Mammary epithelial cell (primary cell): ENCODE measurements at regions of chr9 and their contacts with region 1.

Region 1: DNA sequence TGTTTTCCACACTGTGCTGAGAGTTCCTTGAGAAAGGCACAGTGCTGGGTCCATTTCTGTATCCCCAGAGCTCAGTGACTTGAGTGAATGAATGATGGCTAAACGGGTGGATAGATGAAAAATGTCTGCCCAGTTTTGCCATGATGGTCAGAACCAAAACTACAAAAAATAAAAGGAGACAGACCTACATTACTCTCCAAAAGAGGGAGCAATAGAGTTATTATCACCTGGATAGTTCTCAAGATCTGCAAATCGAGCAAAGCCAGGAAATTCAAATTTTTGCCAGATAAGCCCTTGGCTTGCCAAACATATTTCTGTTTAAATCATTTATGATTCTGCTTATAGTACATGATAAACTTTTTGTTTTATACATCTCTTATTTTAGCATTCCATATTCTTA is 214.2 kb upstream of the ZNF462 start:
- DNase-seq: peak; percentile 15
- H3K4me3 ChIP-seq: no peak overlapping the region
- H3K27ac ChIP-seq: no peak overlapping the region
- H3K4me1 ChIP-seq: no peaks in the 10 kb centered on the region
- H3K27me3 ChIP-seq: no peaks in the 10 kb centered on the region
- CTCF ChIP-seq: peak; percentile 40 to 58

Region 2: GRCh38 chr9:106432631-106433030 is 216.2 kb before region 1 on chr9:
- CTCF ChIA-PET with region 1: no interaction called
- dilution Hi-C with region 1: no loop called
- in situ Hi-C with region 1: no loop called
- intact Hi-C with region 1: loop called (anchors 2 kb)
- DNase-seq: peak; percentile 63
- H3K4me3 ChIP-seq: no peak overlapping the region
- H3K27ac ChIP-seq: no peak overlapping the region
- H3K4me1 ChIP-seq: peaks cover 6% of the 10 kb centered on the region
- H3K27me3 ChIP-seq: no peaks in the 10 kb centered on the region
- CTCF ChIP-seq: peak; percentile 21 to 37

Region 3: DNA sequence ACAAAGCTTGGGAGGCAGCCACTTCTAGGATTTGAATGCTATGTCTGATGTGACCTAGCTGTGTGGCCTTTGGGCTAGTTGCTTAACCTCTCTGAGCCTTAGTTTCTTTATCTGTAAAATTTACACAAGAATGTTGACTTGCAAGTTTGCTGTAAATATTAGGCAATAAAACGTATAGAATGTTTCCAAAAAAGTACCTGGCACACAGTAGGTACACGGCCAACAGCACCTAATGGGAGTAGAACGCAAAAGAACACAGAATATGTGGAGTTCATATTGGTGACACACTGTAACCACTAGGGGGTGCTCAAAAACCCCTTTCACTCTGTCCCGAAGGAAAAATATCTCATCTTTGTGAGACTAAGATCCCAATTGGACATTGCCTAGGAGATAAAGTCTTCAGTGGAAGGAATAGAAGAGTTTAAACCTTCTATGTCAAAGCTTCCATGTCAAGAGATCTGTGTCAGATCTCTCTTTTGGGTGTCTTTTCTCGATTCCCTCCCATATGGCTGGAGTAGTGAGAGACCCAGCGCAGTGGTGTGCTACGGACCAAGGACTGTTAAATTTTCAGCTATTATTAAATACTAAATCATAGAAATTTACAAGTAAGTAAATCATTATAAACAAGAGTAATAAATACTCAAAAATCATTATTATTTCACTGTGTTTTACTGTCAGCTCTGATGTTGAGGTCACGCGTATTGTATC is 488.9 kb after region 1 on chr9:
- CTCF ChIA-PET with region 1: interaction called, 4 read pairs
- dilution Hi-C with region 1: no loop called
- in situ Hi-C with region 1: no loop called
- intact Hi-C with region 1: loop called (anchors 10 kb)
- DNase-seq: no peak
- H3K4me3 ChIP-seq: no peak overlapping the region
- H3K27ac ChIP-seq: no peak overlapping the region
- H3K4me1 ChIP-seq: no peaks in the 10 kb centered on the region
- H3K27me3 ChIP-seq: no peaks in the 10 kb centered on the region
- CTCF ChIP-seq: peak; percentile 67 to 68